ENCODE measurements at regions of chr12 and their contacts with region 1.

Region 1: GRCh38 chr12:116015525-116015924 is 262.0 kb downstream of the MED13L start:
- DNase-seq: no peak
- H3K4me3 ChIP-seq: no peak overlapping the region
- H3K27ac ChIP-seq: peak overlapping the region in 2 of 59 donors; percentile 2 to 14
- H3K27me3 ChIP-seq: no peaks in the 10 kb centered on the region
- CTCF ChIP-seq: peak; percentile 34 to 87 (median 68)

Region 2: DNA sequence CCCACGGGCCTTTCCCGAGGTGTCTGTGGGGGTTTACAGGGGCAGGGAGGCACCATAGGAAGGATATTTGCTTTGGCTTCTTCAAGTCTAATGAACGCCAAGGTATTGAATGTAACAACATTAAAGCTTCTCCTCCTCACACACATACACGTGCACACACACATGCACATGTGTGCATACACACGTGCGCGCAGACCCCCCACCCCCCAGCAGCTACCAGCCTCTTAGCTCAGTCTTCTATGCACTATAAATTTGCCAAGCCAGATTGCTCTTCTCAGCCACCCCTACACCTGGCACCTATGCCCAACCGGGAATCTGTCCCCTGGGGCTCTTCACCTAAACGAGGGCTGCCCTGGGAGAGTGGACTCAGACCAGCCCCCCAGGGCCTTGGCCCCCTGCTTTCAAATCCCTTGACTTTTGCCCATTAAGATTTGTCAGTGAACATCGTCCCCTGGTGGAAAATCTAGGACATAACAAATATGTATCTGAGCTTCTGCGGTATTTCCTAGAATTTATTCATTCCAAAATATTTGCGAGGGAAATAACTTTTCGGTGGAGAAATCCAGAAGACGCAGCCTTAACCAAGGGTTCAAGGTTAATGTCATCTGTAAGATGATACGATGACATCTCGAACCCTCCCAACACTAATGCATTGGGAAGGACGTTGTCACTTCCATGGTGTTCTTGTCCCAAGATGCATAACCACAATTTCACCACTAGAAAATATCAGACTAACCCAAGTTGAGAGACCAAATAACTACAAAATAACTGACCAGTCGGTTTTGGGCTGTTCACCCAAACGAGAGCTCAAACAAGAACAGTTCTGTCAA is 68.4 kb before region 1 on chr12:
- intact Hi-C with region 1: no loop called
- DNase-seq: no peak
- H3K4me3 ChIP-seq: no peak overlapping the region
- H3K27ac ChIP-seq: no peak overlapping the region
- H3K27me3 ChIP-seq: no peaks in the 10 kb centered on the region
- CTCF ChIP-seq: peak in 11 of 56 donors; percentile 12 to 25 (median 14)

Region 3: DNA sequence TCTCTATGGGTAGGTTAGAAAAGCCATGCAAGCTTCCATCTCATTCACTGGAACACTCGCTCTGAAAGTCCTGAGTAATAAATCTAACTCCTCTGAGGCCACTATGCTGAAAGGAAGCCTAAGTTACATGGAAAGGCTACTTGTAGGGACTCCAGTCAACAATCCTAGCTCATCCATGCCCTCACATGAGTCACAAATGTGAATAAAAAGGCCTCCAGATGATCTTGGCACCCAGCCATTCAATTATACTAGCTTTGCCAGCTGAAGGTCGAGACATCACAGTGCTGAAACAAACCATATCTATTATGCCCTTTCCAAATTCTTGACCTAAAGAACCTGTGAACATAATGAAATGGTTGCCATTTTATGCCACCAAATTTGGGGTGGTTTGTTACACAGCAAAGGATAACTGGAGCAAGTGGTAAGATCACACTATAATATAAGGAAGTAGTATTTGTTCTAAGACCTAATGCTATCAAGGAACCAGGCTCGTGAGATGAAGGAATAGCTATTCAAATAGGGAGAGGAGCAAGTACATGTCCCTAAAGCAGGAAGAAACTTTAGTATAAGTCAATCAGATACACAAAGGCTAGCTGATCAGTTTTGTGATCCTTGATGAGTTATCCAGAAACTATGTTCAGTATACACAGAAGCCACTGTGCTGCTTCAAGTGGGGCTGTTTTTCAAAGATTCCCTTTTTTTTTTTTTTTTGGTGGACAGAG is 119.8 kb after region 1 on chr12:
- intact Hi-C with region 1: loop called in 1 of 2 experiments (anchors 10 kb)
- DNase-seq: no peak
- H3K4me3 ChIP-seq: no peak overlapping the region
- H3K27ac ChIP-seq: peak overlapping the region in 4 of 59 donors; percentile 15 to 48 (median 35)
- H3K27me3 ChIP-seq: no peaks in the 10 kb centered on the region
- CTCF ChIP-seq: no peak

Region 4: GRCh38 chr12:116236148-116236731 is 220.7 kb after region 1 on chr12:
- intact Hi-C with region 1: loop called (anchors 5 kb)
- DNase-seq: peak in 4 of 10 donors; percentile 10 to 61 (median 52)
- H3K4me3 ChIP-seq: no peak overlapping the region
- H3K27ac ChIP-seq: peak overlapping the region in 15 of 59 donors; percentile 2 to 66 (median 29)
- H3K27me3 ChIP-seq: no peaks in the 10 kb centered on the region
- CTCF ChIP-seq: peak; percentile 59 to 96 (median 82)

Region 5: GRCh38 chr12:116599285-116600136 is 584.0 kb after region 1 on chr12:
- intact Hi-C with region 1: loop called in 1 of 2 experiments (anchors 10 kb)
- DNase-seq: peak; percentile 51 to 78 (median 66)
- H3K4me3 ChIP-seq: peak overlapping the region; percentile 5 to 66 (median 42)
- H3K27ac ChIP-seq: peak overlapping the region in 48 of 59 donors; percentile 5 to 78 (median 60)
- H3K27me3 ChIP-seq: peaks cover 0 to 4% (median 0%) of the 10 kb centered on the region in 45 donors
- CTCF ChIP-seq: peak in 55 of 56 donors; percentile 42 to 79 (median 64)

Region 6: DNA sequence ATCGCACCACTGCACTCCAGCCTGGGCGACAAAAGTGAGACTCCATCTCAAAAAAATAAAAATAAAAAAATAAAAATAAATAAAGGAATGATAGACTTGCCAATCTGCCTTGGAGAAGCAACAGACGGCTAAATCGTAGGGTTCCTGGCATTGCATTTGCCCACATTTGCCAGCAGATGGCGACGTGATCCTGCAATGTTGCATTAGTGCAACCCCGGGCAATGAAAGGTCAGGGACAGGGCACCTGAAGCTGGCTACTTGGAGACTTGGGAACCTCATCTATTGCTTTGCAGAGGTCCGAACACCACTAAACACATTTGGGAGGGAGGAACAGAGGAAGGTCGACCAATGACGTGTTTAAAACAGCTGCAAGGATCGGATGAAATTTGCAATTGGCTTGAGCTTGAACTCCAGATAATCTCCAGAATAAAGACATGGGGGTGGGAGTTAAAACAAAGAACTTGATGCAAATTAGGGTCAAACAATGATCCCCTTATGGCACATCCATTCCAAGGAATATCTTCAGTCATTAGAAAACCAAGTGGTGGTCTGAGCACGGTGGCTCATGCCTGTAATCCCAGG is 687.8 kb after region 1 on chr12:
- intact Hi-C with region 1: loop called in 1 of 2 experiments (anchors 10 kb)
- DNase-seq: peak; percentile 64 to 83 (median 70)
- H3K4me3 ChIP-seq: peak overlapping the region in 1 of 59 donors; percentile 9
- H3K27ac ChIP-seq: peak overlapping the region in 6 of 59 donors; percentile 6 to 68 (median 20)
- H3K27me3 ChIP-seq: no peaks in the 10 kb centered on the region
- CTCF ChIP-seq: peak; percentile 83 to 98 (median 92)

Measured in dorsolateral prefrontal cortex (tissue), 120 donors.